Activated T-helper 1 cell treated with anti-CD3 and anti-CD28 coated beads, Interleukin-12 subunit alpha, Interleukin-12 subunit beta, Interleukin-2, Interleukin-4 antibody, amounts not matched to agents 30 ng/mL and 10 ng/mL and 1 ng/mL, durations not matched to agents 14 hours and 24 hours and 36 hours (primary cell): ENCODE measurements at regions of chr2 and their contacts with region 1.

Region 1: GRCh38 chr2:46915811-46916630 is 415 bp upstream of the MCFD2 start:
- DNase-seq: peak; percentile 76
- H3K4me3 Mint-ChIP-seq: peak overlapping the region; percentile 96
- H3K27ac Mint-ChIP-seq: peak overlapping the region; percentile 88
- H3K4me1 Mint-ChIP-seq: peaks cover 43% of the 10 kb centered on the region
- H3K27me3 Mint-ChIP-seq: no peaks in the 10 kb centered on the region

Region 2: DNA sequence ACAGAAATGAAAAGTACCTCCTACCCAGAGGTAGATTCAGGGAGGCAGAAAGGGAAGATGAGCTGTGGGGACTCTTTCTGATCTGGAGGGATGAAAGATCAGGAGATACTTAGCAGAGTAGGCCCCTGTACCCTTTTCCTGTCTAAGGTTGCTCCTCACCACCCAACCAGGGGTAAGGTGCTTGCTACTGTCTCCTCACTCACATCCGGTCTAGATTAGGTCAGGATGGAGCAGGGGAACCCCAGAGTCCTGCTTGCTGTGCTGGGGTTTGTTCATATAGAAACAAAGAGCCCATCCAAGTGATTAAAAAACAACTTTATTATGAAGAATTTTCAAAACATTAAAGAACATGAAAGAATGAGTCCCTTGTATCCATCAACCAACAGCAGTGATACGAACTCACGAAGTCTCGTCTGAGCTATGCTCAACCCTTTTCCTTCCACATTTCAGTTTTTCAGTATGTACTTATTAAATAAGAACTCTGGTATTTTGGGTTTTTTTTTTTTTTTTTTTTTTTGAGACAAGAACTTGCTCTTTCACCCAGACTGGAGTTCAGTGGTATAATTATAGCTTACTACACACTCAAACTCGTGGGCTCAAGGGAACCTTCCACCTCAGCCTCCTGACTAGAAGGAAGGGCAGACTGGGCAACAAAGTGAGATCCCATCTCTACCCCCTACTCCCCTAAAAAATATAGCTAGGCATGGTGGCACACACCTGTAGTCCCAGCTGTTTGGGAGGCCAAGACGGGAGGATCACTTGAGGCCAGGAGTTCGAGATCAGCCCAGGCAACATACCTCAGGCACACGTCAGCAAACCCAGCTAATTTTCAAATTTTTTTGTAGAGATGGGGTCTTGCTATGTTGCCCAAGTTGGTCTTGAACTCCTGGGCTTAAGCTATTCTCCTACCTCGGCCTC is 28.1 kb after region 1 on chr2:
- intact Hi-C with region 1: loop called (anchors 1 kb)
- DNase-seq: peak; percentile 75
- H3K4me3 Mint-ChIP-seq: peak overlapping the region; percentile 99
- H3K27ac Mint-ChIP-seq: peak overlapping the region; percentile 99
- H3K4me1 Mint-ChIP-seq: peaks cover 59% of the 10 kb centered on the region
- H3K27me3 Mint-ChIP-seq: no peaks in the 10 kb centered on the region

Region 3: DNA sequence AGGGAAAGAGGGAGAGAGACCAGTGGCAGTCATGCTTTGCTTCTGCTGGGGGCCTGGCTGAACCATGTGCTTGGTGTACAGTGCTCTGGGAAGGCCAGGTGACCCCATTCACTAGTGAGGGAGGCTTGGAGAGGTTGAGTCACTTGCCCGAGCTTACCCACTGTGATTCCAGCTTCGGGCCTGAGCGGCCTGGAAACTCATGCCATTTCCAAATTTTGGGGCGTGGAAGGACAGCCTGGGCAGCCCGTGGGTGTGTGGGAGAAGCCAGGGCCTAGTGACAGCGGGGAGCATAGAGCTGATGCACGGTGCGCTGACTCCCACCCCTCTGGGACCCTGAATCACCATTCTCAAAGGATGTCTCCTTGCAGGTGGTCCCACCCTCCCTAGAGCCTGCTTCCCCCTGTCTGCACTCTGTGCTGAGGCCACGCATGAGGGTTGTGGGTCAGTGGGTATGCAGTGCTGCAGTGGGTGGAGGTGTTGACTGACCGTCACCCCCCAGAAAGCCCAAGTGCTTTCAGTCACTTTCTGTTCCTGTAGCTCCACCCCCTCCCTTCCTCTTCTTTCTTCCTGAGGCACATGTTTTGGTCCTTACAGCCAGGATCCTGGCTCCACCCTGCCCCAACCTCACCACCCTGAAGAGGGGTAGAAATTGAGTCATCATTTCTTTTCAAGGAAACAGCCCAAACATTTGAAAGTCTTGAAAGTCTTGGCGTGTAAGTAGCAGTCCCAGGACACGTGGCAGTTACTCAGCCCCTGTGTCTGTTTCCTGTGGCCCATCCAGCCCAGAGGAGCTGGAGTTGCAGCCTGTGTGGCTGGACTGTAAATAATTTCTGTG is 68.8 kb after region 1 on chr2:
- intact Hi-C with region 1: loop called (anchors 1 kb)
- DNase-seq: peak; percentile 54
- H3K4me3 Mint-ChIP-seq: peak overlapping the region; percentile 27
- H3K27ac Mint-ChIP-seq: peak overlapping the region; percentile 94
- H3K4me1 Mint-ChIP-seq: peaks cover 71% of the 10 kb centered on the region
- H3K27me3 Mint-ChIP-seq: no peaks in the 10 kb centered on the region

Region 4: GRCh38 chr2:47272031-47272864 is 356.2 kb after region 1 on chr2:
- intact Hi-C with region 1: loop called (anchors 5 kb)
- DNase-seq: peak; percentile 32
- H3K4me3 Mint-ChIP-seq: no peak overlapping the region
- H3K27ac Mint-ChIP-seq: no peak overlapping the region
- H3K4me1 Mint-ChIP-seq: no peaks in the 10 kb centered on the region
- H3K27me3 Mint-ChIP-seq: peaks cover 10% of the 10 kb centered on the region

Region 5: GRCh38 chr2:47323009-47323821 is 407.2 kb after region 1 on chr2:
- intact Hi-C with region 1: loop called (anchors 1 kb)
- DNase-seq: peak; percentile 49
- H3K4me3 Mint-ChIP-seq: no peak overlapping the region
- H3K27ac Mint-ChIP-seq: no peak overlapping the region
- H3K4me1 Mint-ChIP-seq: no peaks in the 10 kb centered on the region
- H3K27me3 Mint-ChIP-seq: peaks cover 14% of the 10 kb centered on the region

Region 6: GRCh38 chr2:47402805-47403608 is 487.0 kb after region 1 on chr2 and contains the start of gene MSH2:
- intact Hi-C with region 1: loop called (anchors 2 kb)
- DNase-seq: peak; percentile 91
- H3K4me3 Mint-ChIP-seq: peak within 1 kb of the TSS; percentile 97
- H3K27ac Mint-ChIP-seq: peak within 1 kb of the TSS; percentile 96
- H3K4me1 Mint-ChIP-seq: peaks cover 28% of the 10 kb centered on the region
- H3K27me3 Mint-ChIP-seq: no peaks in the 10 kb centered on the region
- total RNA-seq, gene MSH2: 73.3 TPM in 2 replicates

Region 7: DNA sequence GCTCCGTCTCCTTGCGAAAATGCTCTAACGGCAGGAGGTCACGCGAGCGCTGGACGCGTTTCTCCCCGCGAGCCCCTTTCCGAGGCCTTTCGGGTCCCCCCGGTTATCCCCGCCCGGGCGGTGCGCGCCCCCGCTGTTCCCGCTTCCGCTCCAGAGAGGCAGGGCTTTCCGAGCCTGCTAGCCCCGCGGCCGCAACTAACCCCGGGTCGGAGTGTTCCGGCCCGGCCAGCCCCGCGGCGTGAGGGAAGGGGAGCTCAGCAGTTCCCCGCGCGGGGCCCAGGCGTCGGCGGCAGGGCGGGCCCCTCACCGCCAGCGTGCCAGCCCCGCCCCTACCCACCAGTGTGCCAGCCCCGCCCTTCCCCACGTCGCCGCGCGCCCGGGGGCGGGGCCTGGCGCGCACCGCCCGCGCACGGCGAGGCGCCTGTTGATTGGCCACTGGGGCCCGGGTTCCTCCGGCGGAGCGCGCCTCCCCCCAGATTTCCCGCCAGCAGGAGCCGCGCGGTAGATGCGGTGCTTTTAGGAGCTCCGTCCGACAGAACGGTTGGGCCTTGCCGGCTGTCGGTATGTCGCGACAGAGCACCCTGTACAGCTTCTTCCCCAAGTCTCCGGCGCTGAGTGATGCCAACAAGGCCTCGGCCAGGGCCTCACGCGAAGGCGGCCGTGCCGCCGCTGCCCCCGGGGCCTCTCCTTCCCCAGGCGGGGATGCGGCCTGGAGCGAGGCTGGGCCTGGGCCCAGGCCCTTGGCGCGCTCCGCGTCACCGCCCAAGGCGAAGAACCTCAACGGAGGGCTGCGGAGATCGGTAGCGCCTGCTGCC is 866.9 kb after region 1 on chr2 and contains the start of gene MSH6:
- intact Hi-C with region 1: loop called (anchors 2 kb)
- DNase-seq: peak; percentile 89
- H3K4me3 Mint-ChIP-seq: peak within 1 kb of the TSS; percentile 91
- H3K27ac Mint-ChIP-seq: peak within 1 kb of the TSS; percentile 84
- H3K4me1 Mint-ChIP-seq: peaks cover 21% of the 10 kb centered on the region
- H3K27me3 Mint-ChIP-seq: no peaks in the 10 kb centered on the region
- total RNA-seq, gene MSH6: 123 and 128 TPM in 2 replicates